Activated T-helper 1 cell treated with anti-CD3 and anti-CD28 coated beads, Interleukin-12 subunit alpha, Interleukin-12 subunit beta, Interleukin-2, Interleukin-4 antibody, amounts not matched to agents 30 ng/mL and 10 ng/mL and 1 ng/mL, durations not matched to agents 14 hours and 24 hours and 36 hours (primary cell): ENCODE measurements at regions of chr16 and their contacts with region 1.

Region 1: GRCh38 chr16:81798311-81799137 is 19.4 kb downstream of the PLCG2 start:
- DNase-seq: peak; percentile 5
- H3K4me3 Mint-ChIP-seq: peak overlapping the region; percentile 45
- H3K27ac Mint-ChIP-seq: peak overlapping the region; percentile 85
- H3K4me1 Mint-ChIP-seq: peaks cover 30% of the 10 kb centered on the region
- H3K27me3 Mint-ChIP-seq: no peaks in the 10 kb centered on the region

Region 2: GRCh38 chr16:81755915-81756614 is 42.5 kb before region 1 on chr16:
- intact Hi-C with region 1: loop called (anchors 5 kb)
- DNase-seq: no peak
- H3K4me3 Mint-ChIP-seq: no peak overlapping the region
- H3K27ac Mint-ChIP-seq: no peak overlapping the region
- H3K4me1 Mint-ChIP-seq: peaks cover 27% of the 10 kb centered on the region
- H3K27me3 Mint-ChIP-seq: no peaks in the 10 kb centered on the region

Region 3: DNA sequence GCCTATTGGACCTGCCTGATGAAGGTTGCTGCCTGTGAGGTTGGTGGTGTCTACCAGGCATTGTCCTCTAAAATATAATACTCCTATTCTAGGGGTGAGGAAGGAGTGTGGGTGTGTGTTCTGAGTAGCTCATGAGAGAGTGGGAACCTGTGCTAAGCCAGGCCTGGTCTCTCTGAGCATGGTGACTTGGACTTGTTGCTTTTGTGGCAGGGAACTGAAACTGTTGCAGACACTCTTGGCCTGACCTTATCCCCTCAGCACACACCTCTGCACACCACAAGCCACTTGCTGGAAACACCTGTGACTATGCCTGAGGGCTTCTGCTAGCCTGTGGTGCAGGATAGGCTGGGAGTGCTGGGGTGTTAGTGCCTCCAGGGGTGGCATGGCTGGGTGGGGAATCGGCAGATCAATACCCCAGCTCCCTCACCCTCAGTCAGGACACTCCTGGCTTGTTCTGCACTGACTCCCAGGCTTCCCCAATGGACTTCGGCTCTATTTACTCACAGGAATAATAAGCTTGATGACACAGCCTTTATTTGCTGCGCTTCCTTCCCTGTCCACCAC is 10.5 kb after region 1 on chr16:
- intact Hi-C with region 1: loop called (anchors 1 kb)
- DNase-seq: peak; percentile 29
- H3K4me3 Mint-ChIP-seq: no peak overlapping the region
- H3K27ac Mint-ChIP-seq: peak overlapping the region; percentile 46
- H3K4me1 Mint-ChIP-seq: peaks cover 44% of the 10 kb centered on the region
- H3K27me3 Mint-ChIP-seq: no peaks in the 10 kb centered on the region

Region 4: GRCh38 chr16:81873843-81874752 is 75.6 kb after region 1 on chr16:
- intact Hi-C with region 1: loop called (anchors 5 kb)
- DNase-seq: peak; percentile 38
- H3K4me3 Mint-ChIP-seq: no peak overlapping the region
- H3K27ac Mint-ChIP-seq: no peak overlapping the region
- H3K4me1 Mint-ChIP-seq: peaks cover 8% of the 10 kb centered on the region
- H3K27me3 Mint-ChIP-seq: peaks cover 12% of the 10 kb centered on the region

Region 5: DNA sequence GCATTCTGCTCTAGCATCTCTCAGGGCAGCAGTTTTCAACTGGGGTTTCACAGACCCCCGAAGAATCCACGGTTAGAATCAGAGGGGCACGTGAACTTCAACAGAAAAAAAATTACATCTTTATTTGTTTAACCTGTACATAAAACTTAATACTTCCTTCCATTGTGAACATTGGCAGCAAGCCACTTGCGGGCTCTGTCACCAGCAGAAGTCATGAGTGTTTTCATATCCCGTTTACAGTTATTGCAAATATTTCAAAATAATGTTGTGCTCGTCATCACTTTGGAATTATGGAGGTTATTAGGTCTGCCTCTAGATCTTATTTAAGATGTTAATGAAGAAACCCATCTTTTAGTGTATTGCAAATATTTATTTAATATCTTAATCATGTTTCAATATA is 103.0 kb after region 1 on chr16:
- intact Hi-C with region 1: no loop called
- DNase-seq: no peak
- H3K4me3 Mint-ChIP-seq: no peak overlapping the region
- H3K27ac Mint-ChIP-seq: no peak overlapping the region
- H3K4me1 Mint-ChIP-seq: no peaks in the 10 kb centered on the region
- H3K27me3 Mint-ChIP-seq: no peaks in the 10 kb centered on the region

Region 6: GRCh38 chr16:83187405-83187804 is 1388.9 kb after region 1 on chr16:
- intact Hi-C with region 1: loop called (anchors 5 kb)
- DNase-seq: no peak
- H3K4me3 Mint-ChIP-seq: no peak overlapping the region
- H3K27ac Mint-ChIP-seq: no peak overlapping the region
- H3K4me1 Mint-ChIP-seq: peaks cover 7% of the 10 kb centered on the region
- H3K27me3 Mint-ChIP-seq: peaks cover 3% of the 10 kb centered on the region